Right cardiac atrium (tissue), 5 donors: ENCODE measurements at regions of chr20 and their contacts with region 1.

Region 1: GRCh38 chr20:38343311-38344106 is 2.8 kb upstream of the LBP start:
- DNase-seq: peak; percentile 69 to 85 (median 75)
- ATAC-seq: peak in 1 of 2 donors; percentile 39
- H3K4me3 ChIP-seq: no peak overlapping the region
- H3K27ac ChIP-seq: peak overlapping the region; percentile 38
- H3K4me1 ChIP-seq: no peaks in the 10 kb centered on the region
- H3K27me3 ChIP-seq: no peaks in the 10 kb centered on the region

Region 2: DNA sequence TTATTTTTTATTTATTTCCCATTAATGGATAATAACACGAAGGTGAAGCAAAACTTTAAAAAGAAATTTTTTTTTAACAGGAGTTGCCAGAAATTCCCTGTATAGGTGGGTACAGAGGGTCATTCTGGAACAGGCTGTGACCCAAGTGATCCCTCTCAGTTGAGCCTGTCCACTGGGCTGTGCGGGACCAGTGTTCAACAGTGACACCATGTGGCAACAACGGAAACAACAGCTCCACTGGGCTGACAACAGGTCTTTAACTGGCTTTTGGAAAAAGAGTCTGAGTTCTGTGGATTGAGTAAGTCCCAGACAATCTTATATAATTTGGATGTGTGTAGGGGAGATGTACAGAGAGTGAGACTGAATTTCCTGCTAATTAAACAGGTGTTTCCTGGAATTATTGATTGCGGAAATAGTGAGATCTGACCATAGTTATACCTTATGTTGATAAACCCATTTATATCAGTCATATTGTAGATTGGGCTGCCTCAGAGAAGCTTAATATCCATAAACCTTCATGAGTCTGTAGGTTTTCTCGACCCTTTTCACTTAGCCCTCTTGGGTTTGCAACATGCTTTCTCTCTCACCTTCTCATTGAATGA is 100.6 kb before region 1 on chr20:
- intact Hi-C with region 1: no loop called
- DNase-seq: no peak
- ATAC-seq: no peak
- H3K4me3 ChIP-seq: no peak overlapping the region
- H3K27ac ChIP-seq: no peak overlapping the region
- H3K4me1 ChIP-seq: peaks cover 4% of the 10 kb centered on the region
- H3K27me3 ChIP-seq: no peaks in the 10 kb centered on the region

Region 3: GRCh38 chr20:38406476-38406875 is 63.0 kb after region 1 on chr20:
- intact Hi-C with region 1: loop called in 1 of 4 experiments (anchors 10 kb)
- DNase-seq: no peak
- ATAC-seq: no peak
- H3K4me3 ChIP-seq: no peak overlapping the region
- H3K27ac ChIP-seq: no peak overlapping the region
- H3K4me1 ChIP-seq: no peaks in the 10 kb centered on the region
- H3K27me3 ChIP-seq: no peaks in the 10 kb centered on the region